ENCODE measurements at regions of chr6 and their contacts with region 1.

Region 1: GRCh38 chr6:63635588-63636517 is at the start of gene PHF3:
- DNase-seq: peak; percentile 86
- H3K4me3 Mint-ChIP-seq: peak within 1 kb of the TSS; percentile 89
- H3K27ac Mint-ChIP-seq: peak within 1 kb of the TSS; percentile 95
- H3K4me1 Mint-ChIP-seq: peaks cover 24% of the 10 kb centered on the region
- H3K27me3 Mint-ChIP-seq: no peaks in the 10 kb centered on the region
- CTCF ChIP-seq: peak; percentile 5
- total RNA-seq, gene PHF3: 41.0 and 46.4 TPM in 2 replicates

Region 2: DNA sequence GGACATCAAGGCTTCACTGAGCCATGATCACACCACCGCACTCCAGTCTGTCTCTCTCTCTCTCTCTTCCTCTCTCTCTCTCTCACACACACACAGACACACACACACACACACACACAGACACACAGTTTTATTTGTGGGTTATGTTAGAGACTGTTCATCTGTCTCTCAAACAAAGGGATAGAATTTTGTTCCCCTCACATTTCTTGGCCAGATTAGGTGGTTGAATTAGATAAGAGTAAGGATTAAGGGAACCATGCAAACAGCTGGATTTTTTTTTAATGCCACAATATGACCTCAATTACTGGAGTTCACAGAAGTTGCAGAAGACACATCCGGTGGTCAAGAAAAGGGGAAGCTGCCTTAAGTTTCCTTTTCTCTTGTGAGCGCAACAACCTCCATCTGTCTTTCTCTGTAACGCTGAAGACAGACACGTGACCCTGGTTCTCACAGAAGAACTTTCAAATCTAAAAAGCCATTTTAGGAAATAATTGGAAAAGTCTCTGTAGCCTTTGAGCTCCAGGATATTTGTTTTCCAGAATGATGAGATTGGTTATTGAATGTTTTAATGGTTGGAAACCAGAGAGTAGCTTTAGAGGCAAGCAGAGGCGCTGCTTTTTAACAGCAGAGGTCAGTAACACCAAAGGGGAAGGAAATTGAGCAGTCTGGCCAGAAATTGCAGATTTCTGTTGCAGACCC is 283.1 kb before region 1 on chr6:
- CTCF ChIA-PET with region 1: interaction called, 13 read pairs
- POLR2A ChIA-PET with region 1: interaction called, 9 read pairs
- intact Hi-C with region 1: loop called (anchors 2 kb)
- DNase-seq: peak; percentile 67
- H3K4me3 Mint-ChIP-seq: no peak overlapping the region
- H3K27ac Mint-ChIP-seq: no peak overlapping the region
- H3K4me1 Mint-ChIP-seq: peaks cover 8% of the 10 kb centered on the region
- H3K27me3 Mint-ChIP-seq: no peaks in the 10 kb centered on the region
- CTCF ChIP-seq: peak; percentile 72

Region 3: GRCh38 chr6:63615590-63615989 is 20.3 kb before region 1 on chr6:
- CTCF ChIA-PET with region 1: interaction called, 5 read pairs
- POLR2A ChIA-PET with region 1: interaction called, 6 read pairs
- intact Hi-C with region 1: loop called (anchors 1 kb)
- DNase-seq: no peak
- H3K4me3 Mint-ChIP-seq: no peak overlapping the region
- H3K27ac Mint-ChIP-seq: no peak overlapping the region
- H3K4me1 Mint-ChIP-seq: no peaks in the 10 kb centered on the region
- H3K27me3 Mint-ChIP-seq: peaks cover 11% of the 10 kb centered on the region
- CTCF ChIP-seq: no peak

Region 4: GRCh38 chr6:63663147-63663877 is 27.5 kb after region 1 on chr6:
- CTCF ChIA-PET with region 1: no interaction called
- POLR2A ChIA-PET with region 1: interaction called, 27 read pairs
- intact Hi-C with region 1: no loop called
- DNase-seq: peak; percentile 73
- H3K4me3 Mint-ChIP-seq: peak overlapping the region; percentile 21
- H3K27ac Mint-ChIP-seq: peak overlapping the region; percentile 63
- H3K4me1 Mint-ChIP-seq: peaks cover 22% of the 10 kb centered on the region
- H3K27me3 Mint-ChIP-seq: no peaks in the 10 kb centered on the region
- CTCF ChIP-seq: no peak

Region 5: DNA sequence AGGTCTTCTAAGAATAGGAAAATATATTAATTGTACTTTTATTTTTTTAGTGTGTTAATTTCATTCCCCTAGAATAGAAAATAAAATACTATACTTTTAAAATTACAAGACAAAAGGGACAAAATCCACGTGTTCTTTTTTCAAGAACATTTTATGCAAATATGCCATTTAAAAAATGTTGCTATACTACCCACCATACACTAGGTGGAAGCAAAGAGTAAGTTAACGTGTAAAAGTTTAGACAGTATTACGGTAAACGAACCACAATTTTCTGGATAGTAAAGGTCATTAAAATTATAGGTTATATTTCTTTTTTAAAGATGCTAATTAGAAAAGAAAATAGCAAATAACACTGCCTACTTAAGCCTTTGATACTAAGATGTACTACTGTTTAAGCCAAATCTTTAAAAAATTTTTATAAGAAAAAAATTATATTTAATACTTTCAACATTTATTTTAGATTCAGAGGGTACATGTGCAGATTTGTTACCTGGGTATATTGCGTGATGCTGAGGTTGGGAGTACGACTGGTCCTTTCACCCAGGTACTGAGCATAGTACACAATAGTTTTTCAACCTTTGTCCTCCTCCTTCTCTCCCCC is 287.4 kb after region 1 on chr6:
- CTCF ChIA-PET with region 1: no interaction called
- POLR2A ChIA-PET with region 1: no interaction called
- intact Hi-C with region 1: loop called (anchors 5 kb)
- DNase-seq: peak; percentile 57
- H3K4me3 Mint-ChIP-seq: no peak overlapping the region
- H3K27ac Mint-ChIP-seq: no peak overlapping the region
- H3K4me1 Mint-ChIP-seq: no peaks in the 10 kb centered on the region
- H3K27me3 Mint-ChIP-seq: no peaks in the 10 kb centered on the region
- CTCF ChIP-seq: peak; percentile 36